Transverse colon (tissue), 4 donors: ENCODE measurements at regions of chr1 and their contacts with region 1.

Region 1: GRCh38 chr1:96376843-96377242 is 344.7 kb upstream of the PTBP2 start:
- DNase-seq: no peak
- H3K4me3 ChIP-seq: no peak overlapping the region
- H3K27ac ChIP-seq: no peak overlapping the region
- H3K4me1 ChIP-seq: no peaks in the 10 kb centered on the region
- H3K27me3 ChIP-seq: no peaks in the 10 kb centered on the region
- CTCF ChIP-seq: no peak
- EP300 ChIP-seq: no peak
- POLR2A ChIP-seq: no peak

Region 2: GRCh38 chr1:96329121-96329520 is 47.7 kb before region 1 on chr1:
- in situ Hi-C with region 1: no loop called
- intact Hi-C with region 1: loop called (anchors 5 kb)
- DNase-seq: no peak
- H3K4me3 ChIP-seq: no peak overlapping the region
- H3K27ac ChIP-seq: no peak overlapping the region
- H3K4me1 ChIP-seq: no peaks in the 10 kb centered on the region
- H3K27me3 ChIP-seq: no peaks in the 10 kb centered on the region
- CTCF ChIP-seq: no peak
- EP300 ChIP-seq: no peak
- POLR2A ChIP-seq: no peak

Region 3: GRCh38 chr1:97461782-97462181 is 1084.9 kb after region 1 on chr1:
- in situ Hi-C with region 1: no loop called
- intact Hi-C with region 1: no loop called
- DNase-seq: no peak
- H3K4me3 ChIP-seq: no peak overlapping the region
- H3K27ac ChIP-seq: no peak overlapping the region
- H3K4me1 ChIP-seq: no peaks in the 10 kb centered on the region
- H3K27me3 ChIP-seq: no peaks in the 10 kb centered on the region
- CTCF ChIP-seq: no peak
- EP300 ChIP-seq: no peak
- POLR2A ChIP-seq: no peak